B cell (primary cell): ENCODE measurements at regions of chr14 and their contacts with region 1.

Region 1: GRCh38 chr14:22570132-22570949 is 18.7 kb downstream of the DAD1 start:
- DNase-seq: peak; percentile 97
- ATAC-seq: peak; percentile 90
- H3K4me3 ChIP-seq: peak overlapping the region; percentile 25 to 60 (median 37)
- H3K4me3 Mint-ChIP-seq: peak overlapping the region; percentile 44
- H3K27ac ChIP-seq: peak overlapping the region; percentile 74 to 78
- H3K27ac Mint-ChIP-seq: peak overlapping the region; percentile 54
- H3K4me1 ChIP-seq: peaks cover 46 to 53% of the 10 kb centered on the region in 2 donors
- H3K4me1 Mint-ChIP-seq: peaks cover 47% of the 10 kb centered on the region
- H3K27me3 ChIP-seq: no peaks in the 10 kb centered on the region
- H3K27me3 Mint-ChIP-seq: no peaks in the 10 kb centered on the region
- CTCF ChIP-seq: peak; percentile 97

Region 2: GRCh38 chr14:22418631-22419030 is 151.7 kb before region 1 on chr14:
- CTCF ChIA-PET with region 1: interaction called, 14 read pairs
- POLR2A ChIA-PET with region 1: interaction called, 3 read pairs
- intact Hi-C with region 1: no loop called
- DNase-seq: no peak
- ATAC-seq: peak; percentile 15
- H3K4me3 ChIP-seq: no peak overlapping the region
- H3K4me3 Mint-ChIP-seq: peak overlapping the region; percentile 11
- H3K27ac ChIP-seq: no peak overlapping the region
- H3K27ac Mint-ChIP-seq: no peak overlapping the region
- H3K4me1 ChIP-seq: peaks cover 24% of the 10 kb centered on the region in 2 donors
- H3K4me1 Mint-ChIP-seq: peaks cover 26% of the 10 kb centered on the region
- H3K27me3 ChIP-seq: no peaks in the 10 kb centered on the region
- H3K27me3 Mint-ChIP-seq: no peaks in the 10 kb centered on the region
- CTCF ChIP-seq: no peak

Region 3: GRCh38 chr14:22497144-22497423 is 73.3 kb before region 1 on chr14:
- CTCF ChIA-PET with region 1: interaction called, 17 read pairs
- POLR2A ChIA-PET with region 1: no interaction called
- intact Hi-C with region 1: no loop called
- DNase-seq: no peak
- ATAC-seq: peak; percentile 13
- H3K4me3 ChIP-seq: no peak overlapping the region
- H3K4me3 Mint-ChIP-seq: peak overlapping the region; percentile 54
- H3K27ac ChIP-seq: no peak overlapping the region
- H3K27ac Mint-ChIP-seq: peak overlapping the region; percentile 89
- H3K4me1 ChIP-seq: peaks cover 17 to 48% of the 10 kb centered on the region in 2 donors
- H3K4me1 Mint-ChIP-seq: peaks cover 68% of the 10 kb centered on the region
- H3K27me3 ChIP-seq: no peaks in the 10 kb centered on the region
- H3K27me3 Mint-ChIP-seq: no peaks in the 10 kb centered on the region
- CTCF ChIP-seq: no peak

Region 4: DNA sequence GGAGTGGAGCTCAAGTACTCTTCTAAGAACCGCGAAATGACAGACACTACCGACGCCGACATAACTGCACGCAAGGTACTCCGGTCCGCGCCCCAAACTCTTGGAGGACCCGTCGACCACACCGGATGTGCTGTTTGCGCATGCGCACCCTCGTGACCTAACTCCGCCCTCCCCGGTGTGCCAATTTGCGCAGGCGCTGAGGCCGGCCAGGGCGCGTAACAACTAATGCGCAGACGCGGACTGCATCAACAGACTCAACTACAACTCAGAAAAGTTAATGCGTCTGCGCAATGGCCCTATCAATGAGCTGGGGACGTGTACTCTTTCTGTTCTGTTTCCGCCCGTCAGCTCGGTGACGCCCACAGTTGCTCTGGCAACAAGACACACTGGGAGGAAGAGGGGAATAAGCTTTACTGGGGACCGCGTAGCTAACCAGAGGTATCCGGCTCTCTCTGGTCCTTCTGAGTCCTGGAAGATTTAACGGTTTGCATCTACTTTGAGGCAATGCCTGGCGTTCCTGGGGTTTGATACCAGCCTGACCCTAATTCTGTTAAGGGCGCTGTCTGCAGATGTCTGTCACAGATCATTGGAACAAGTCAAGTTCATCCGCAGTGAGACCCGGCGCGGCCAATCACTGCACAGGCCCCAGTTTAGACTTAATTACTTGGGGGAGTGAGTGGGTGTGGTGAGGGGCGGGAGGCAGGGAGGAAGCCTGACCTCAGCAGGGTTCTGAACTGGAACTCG is 18.9 kb after region 1 on chr14 and contains the start of gene DAD1:
- CTCF ChIA-PET with region 1: interaction called, 85 read pairs
- POLR2A ChIA-PET with region 1: interaction called, 7 read pairs
- intact Hi-C with region 1: loop called (anchors 1 kb)
- DNase-seq: peak; percentile 100
- ATAC-seq: peak; percentile 89
- H3K4me3 ChIP-seq: peak within 1 kb of the TSS; percentile 75 to 84 (median 78)
- H3K4me3 Mint-ChIP-seq: peak within 1 kb of the TSS; percentile 99
- H3K27ac ChIP-seq: peak within 1 kb of the TSS; percentile 97
- H3K27ac Mint-ChIP-seq: peak within 1 kb of the TSS; percentile 96
- H3K4me1 ChIP-seq: peaks cover 30% of the 10 kb centered on the region in 2 donors
- H3K4me1 Mint-ChIP-seq: peaks cover 53% of the 10 kb centered on the region
- H3K27me3 ChIP-seq: no peaks in the 10 kb centered on the region
- H3K27me3 Mint-ChIP-seq: peaks cover 2% of the 10 kb centered on the region
- CTCF ChIP-seq: no peak
- total RNA-seq, gene DAD1: 76.1 and 77.4 TPM in 2 replicates

Region 5: DNA sequence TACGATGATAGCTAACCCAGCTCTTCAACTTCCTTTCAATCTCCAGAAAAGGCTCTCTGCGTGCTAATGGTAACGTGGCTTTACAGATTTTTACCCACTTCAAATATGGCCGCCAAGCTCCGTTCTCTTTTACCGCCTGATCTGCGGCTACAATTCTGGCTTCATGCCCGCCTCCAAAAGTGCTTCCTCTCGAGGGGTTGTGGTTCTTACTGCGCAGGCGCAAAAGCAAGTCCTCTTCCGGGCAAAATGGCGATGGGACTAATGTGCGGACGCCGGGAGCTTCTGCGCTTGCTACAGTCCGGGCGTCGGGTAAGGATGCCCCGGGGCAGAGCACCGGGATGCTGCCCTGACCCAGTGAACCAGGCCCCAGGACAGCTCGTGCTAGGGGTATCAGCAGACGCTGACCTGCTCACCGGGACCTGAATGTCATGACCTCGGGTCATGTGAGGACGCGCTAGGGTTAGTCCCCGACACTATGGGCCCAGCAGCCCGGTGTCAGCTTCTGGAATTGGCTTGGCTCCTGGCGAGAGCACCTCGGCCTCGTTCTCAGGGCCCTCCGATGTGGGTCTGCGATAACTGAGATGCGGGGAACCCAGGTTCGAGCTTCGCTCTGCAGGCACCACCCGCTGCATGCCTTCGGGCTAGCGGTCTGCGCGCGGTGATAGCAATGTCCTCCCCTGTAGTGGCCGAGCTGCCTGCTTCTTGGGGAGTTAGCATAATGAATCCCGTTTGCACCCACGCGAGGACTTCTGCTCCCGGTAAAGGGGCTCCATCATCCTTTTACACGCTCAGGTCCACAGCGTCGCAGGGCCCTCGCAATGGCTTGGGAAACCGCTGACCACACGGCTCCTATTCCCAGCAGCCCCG is 196.3 kb after region 1 on chr14 and contains the start of gene OXA1L:
- CTCF ChIA-PET with region 1: interaction called, 16 read pairs
- POLR2A ChIA-PET with region 1: interaction called, 3 read pairs
- intact Hi-C with region 1: loop called (anchors 5 kb)
- DNase-seq: peak; percentile 98
- ATAC-seq: peak; percentile 93
- H3K4me3 ChIP-seq: peak within 1 kb of the TSS; percentile 83 to 95 (median 92)
- H3K4me3 Mint-ChIP-seq: peak within 1 kb of the TSS; percentile 84
- H3K27ac ChIP-seq: peak within 1 kb of the TSS; percentile 84 to 89
- H3K27ac Mint-ChIP-seq: peak within 1 kb of the TSS; percentile 93
- H3K4me1 ChIP-seq: peaks cover 18 to 23% of the 10 kb centered on the region in 2 donors
- H3K4me1 Mint-ChIP-seq: peaks cover 34% of the 10 kb centered on the region
- H3K27me3 ChIP-seq: no peaks in the 10 kb centered on the region
- H3K27me3 Mint-ChIP-seq: no peaks in the 10 kb centered on the region
- CTCF ChIP-seq: no peak
- total RNA-seq, gene OXA1L: 186 and 201 TPM in 2 replicates

Region 6: GRCh38 chr14:22900081-22900799 is 329.9 kb after region 1 on chr14:
- CTCF ChIA-PET with region 1: interaction called, 38 read pairs
- POLR2A ChIA-PET with region 1: no interaction called
- intact Hi-C with region 1: loop called (anchors 1 kb)
- DNase-seq: peak; percentile 81
- ATAC-seq: peak; percentile 76
- H3K4me3 ChIP-seq: no peak overlapping the region
- H3K4me3 Mint-ChIP-seq: no peak overlapping the region
- H3K27ac ChIP-seq: peak overlapping the region in 1 of 2 donors; percentile 38
- H3K27ac Mint-ChIP-seq: peak overlapping the region; percentile 10
- H3K4me1 ChIP-seq: peaks cover 3 to 6% of the 10 kb centered on the region in 2 donors
- H3K4me1 Mint-ChIP-seq: peaks cover 7% of the 10 kb centered on the region
- H3K27me3 ChIP-seq: no peaks in the 10 kb centered on the region
- H3K27me3 Mint-ChIP-seq: no peaks in the 10 kb centered on the region
- CTCF ChIP-seq: peak; percentile 71